ENCODE measurements at regions of chr1 and their contacts with region 1.

Region 1: GRCh38 chr1:40040511-40041465 is at the start of gene CAP1:
- DNase-seq: peak; percentile 99 to 100 (median 100)
- ATAC-seq: peak; percentile 89
- H3K4me3 ChIP-seq: peak within 1 kb of the TSS; percentile 99
- H3K4me3 Mint-ChIP-seq: peak within 1 kb of the TSS; percentile 89
- H3K27ac ChIP-seq: peak within 1 kb of the TSS; percentile 92 to 94
- H3K27ac Mint-ChIP-seq: peak within 1 kb of the TSS; percentile 93
- H3K4me1 ChIP-seq: peaks cover 71% of the 10 kb centered on the region
- H3K4me1 Mint-ChIP-seq: peaks cover 70% of the 10 kb centered on the region
- H3K27me3 ChIP-seq: no peaks in the 10 kb centered on the region
- H3K27me3 Mint-ChIP-seq: no peaks in the 10 kb centered on the region
- CTCF ChIP-seq: no peak
- total RNA-seq, gene CAP1: 123 to 126 TPM

Region 2: DNA sequence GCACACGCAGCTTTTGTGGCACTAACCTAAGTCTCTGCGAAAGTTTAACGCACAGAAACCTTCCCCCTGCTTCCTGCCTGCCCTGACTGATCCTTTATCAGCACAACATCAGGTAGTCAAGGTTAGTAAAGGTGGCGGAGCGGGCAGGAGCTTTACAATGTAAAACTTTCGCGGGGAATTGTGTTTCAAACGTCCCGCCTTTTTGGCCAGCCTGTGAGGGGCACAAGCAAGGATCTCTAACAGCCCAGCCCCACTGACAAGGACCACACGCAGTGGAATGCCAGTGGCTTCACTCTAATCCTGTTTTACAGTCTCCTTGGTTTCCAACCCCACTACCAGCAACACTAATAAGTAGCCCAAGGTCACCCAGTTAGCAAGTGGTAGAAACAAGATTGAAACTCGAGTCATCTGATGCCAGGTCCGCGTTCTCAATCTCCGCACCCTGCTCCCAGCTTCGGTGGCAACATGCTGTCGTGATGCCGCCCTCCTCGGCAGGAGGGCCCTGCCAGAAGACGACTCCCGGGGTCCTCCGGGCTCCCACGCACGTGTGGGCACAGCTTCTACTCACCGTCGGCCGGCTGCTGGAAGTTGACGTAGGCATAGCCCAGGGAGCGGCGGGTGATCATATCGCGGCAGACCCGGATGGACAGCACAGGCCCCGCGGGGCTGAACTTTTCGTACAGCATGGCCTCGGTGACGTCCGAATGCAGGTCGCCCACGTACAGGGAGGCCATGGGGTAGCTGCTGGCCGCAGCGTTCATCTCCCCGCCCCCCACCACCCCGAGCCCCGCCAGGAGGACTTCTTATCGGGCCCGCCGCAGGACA is 465.4 kb before region 1 on chr1:
- CTCF ChIA-PET with region 1: no interaction called
- POLR2A ChIA-PET with region 1: no interaction called
- intact Hi-C with region 1: loop called in 1 of 2 experiments (anchors 5 kb)
- DNase-seq: peak; percentile 16 to 78 (median 57)
- ATAC-seq: peak; percentile 65
- H3K4me3 ChIP-seq: peak overlapping the region; percentile 64 to 75
- H3K4me3 Mint-ChIP-seq: peak overlapping the region; percentile 93
- H3K27ac ChIP-seq: peak overlapping the region; percentile 68 to 72
- H3K27ac Mint-ChIP-seq: peak overlapping the region; percentile 92
- H3K4me1 ChIP-seq: peaks cover 41% of the 10 kb centered on the region
- H3K4me1 Mint-ChIP-seq: peaks cover 44% of the 10 kb centered on the region
- H3K27me3 ChIP-seq: no peaks in the 10 kb centered on the region
- H3K27me3 Mint-ChIP-seq: no peaks in the 10 kb centered on the region
- CTCF ChIP-seq: no peak

Region 3: GRCh38 chr1:40059338-40059959 is 18.7 kb after region 1 on chr1:
- CTCF ChIA-PET with region 1: interaction called, 20 read pairs
- POLR2A ChIA-PET with region 1: interaction called, 68 read pairs
- intact Hi-C with region 1: loop called (anchors 1 kb)
- DNase-seq: peak in 3 of 9 experiments; percentile 35 to 74 (median 50)
- ATAC-seq: peak; percentile 74
- H3K4me3 ChIP-seq: peak overlapping the region; percentile 18 to 24
- H3K4me3 Mint-ChIP-seq: peak overlapping the region; percentile 79
- H3K27ac ChIP-seq: peak overlapping the region; percentile 36 to 71
- H3K27ac Mint-ChIP-seq: peak overlapping the region; percentile 81
- H3K4me1 ChIP-seq: peaks cover 89% of the 10 kb centered on the region
- H3K4me1 Mint-ChIP-seq: peaks cover 92% of the 10 kb centered on the region
- H3K27me3 ChIP-seq: no peaks in the 10 kb centered on the region
- H3K27me3 Mint-ChIP-seq: no peaks in the 10 kb centered on the region
- CTCF ChIP-seq: no peak

Region 4: GRCh38 chr1:40096977-40097782 is 56.4 kb after region 1 on chr1 and contains the start of gene PPT1:
- CTCF ChIA-PET with region 1: no interaction called
- POLR2A ChIA-PET with region 1: no interaction called
- intact Hi-C with region 1: loop called in 1 of 2 experiments (anchors 2 kb)
- DNase-seq: peak; percentile 58 to 90 (median 77)
- ATAC-seq: peak; percentile 83
- H3K4me3 ChIP-seq: peak within 1 kb of the TSS; percentile 55 to 57
- H3K4me3 Mint-ChIP-seq: peak within 1 kb of the TSS; percentile 91
- H3K27ac ChIP-seq: peak within 1 kb of the TSS; percentile 24 to 51
- H3K27ac Mint-ChIP-seq: peak within 1 kb of the TSS; percentile 94
- H3K4me1 ChIP-seq: peaks cover 23% of the 10 kb centered on the region
- H3K4me1 Mint-ChIP-seq: peaks cover 32% of the 10 kb centered on the region
- H3K27me3 ChIP-seq: peaks cover 0 to 4% of the 10 kb centered on the region in 2 experiments
- H3K27me3 Mint-ChIP-seq: no peaks in the 10 kb centered on the region
- CTCF ChIP-seq: peak; percentile 52
- total RNA-seq, gene PPT1: 32.2 to 34.2 TPM

Region 5: DNA sequence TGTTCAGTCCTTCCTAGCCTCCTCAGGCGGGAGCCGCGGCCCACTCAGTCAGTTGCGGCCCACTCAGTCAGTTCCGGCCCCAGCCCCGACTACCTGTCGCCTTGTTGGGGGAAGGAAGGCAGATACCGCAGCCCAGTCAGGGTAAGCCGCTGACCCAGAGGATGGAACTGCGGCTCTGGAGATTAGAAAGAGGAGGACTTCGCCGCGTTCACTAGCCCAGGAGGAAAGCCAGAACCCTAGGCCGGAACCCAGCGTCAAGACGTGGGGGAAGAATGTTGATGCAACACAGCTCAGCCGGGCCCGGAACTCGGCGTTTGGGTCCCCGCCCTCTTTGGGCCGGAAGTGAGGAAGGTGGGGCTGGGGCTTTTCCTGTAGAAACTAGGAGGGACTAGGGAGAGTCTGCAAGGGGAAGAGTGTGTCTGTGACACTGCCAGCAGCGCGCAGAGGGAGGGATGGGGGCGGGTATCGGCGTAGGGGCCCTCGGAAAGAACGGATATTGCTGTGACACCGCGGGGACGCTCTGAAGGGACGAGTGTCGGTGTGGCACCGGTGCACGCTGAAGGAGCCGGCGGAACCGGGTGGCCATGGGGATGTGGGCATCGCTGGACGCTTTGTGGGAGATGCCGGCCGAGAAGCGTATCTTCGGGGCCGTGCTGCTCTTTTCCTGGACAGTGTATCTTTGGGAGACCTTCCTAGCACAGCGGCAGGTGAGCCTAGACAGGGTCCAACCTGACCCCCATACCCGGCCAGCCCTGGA is 217.1 kb after region 1 on chr1 and contains the start of gene ZMPSTE24:
- CTCF ChIA-PET with region 1: interaction called, 3 read pairs
- POLR2A ChIA-PET with region 1: no interaction called
- intact Hi-C with region 1: loop called in 1 of 2 experiments (anchors 1 kb)
- DNase-seq: peak; percentile 92 to 99 (median 95)
- ATAC-seq: peak; percentile 95
- H3K4me3 ChIP-seq: peak within 1 kb of the TSS; percentile 95 to 98
- H3K4me3 Mint-ChIP-seq: peak within 1 kb of the TSS; percentile 98
- H3K27ac ChIP-seq: peak within 1 kb of the TSS; percentile 88 to 99
- H3K27ac Mint-ChIP-seq: peak within 1 kb of the TSS; percentile 100
- H3K4me1 ChIP-seq: peaks cover 20% of the 10 kb centered on the region
- H3K4me1 Mint-ChIP-seq: peaks cover 56% of the 10 kb centered on the region
- H3K27me3 ChIP-seq: no peaks in the 10 kb centered on the region
- H3K27me3 Mint-ChIP-seq: no peaks in the 10 kb centered on the region
- CTCF ChIP-seq: no peak
- total RNA-seq, gene ZMPSTE24: 11.5 to 12.2 TPM

Region 6: DNA sequence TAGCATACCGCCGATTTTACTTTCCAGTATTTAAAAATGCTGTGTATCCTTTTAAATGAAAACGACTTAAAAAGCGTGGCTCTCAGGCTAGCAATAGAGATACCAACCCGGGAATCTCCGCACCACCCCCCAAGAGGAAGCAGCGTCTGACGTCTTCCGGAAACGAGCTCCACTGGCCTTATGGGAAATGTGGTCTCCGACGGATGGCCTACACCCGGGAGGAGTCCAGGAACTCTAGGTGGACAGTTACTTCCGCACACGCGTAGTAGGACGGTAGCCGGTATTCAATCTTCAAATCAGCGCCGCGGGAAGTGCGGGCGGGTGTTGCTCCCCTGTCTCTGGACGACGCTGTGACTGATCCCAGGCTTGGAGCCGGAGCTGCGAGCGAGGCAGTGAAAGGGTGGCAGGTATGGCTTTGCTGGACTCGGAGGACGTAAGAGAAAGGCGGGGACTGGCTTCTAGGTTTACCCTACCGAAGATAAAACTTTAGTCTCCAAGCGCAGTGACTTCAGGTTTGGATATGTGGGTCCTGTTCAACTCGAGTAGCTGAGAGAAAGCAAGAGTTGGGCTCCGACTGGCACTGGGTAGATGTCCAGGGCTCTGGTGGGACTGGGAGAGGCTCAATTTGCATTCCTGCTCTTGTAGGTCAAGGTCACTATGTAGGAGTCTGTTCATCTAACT is 490.7 kb after region 1 on chr1 and contains the start of gene ZNF684:
- CTCF ChIA-PET with region 1: no interaction called
- POLR2A ChIA-PET with region 1: no interaction called
- intact Hi-C with region 1: no loop called
- DNase-seq: peak; percentile 64 to 96 (median 85)
- ATAC-seq: peak; percentile 96
- H3K4me3 ChIP-seq: peak within 1 kb of the TSS; percentile 68 to 71
- H3K4me3 Mint-ChIP-seq: peak within 1 kb of the TSS; percentile 100
- H3K27ac ChIP-seq: peak within 1 kb of the TSS; percentile 57 to 83
- H3K27ac Mint-ChIP-seq: peak within 1 kb of the TSS; percentile 93
- H3K4me1 ChIP-seq: peaks cover 11% of the 10 kb centered on the region
- H3K4me1 Mint-ChIP-seq: peaks cover 28% of the 10 kb centered on the region
- H3K27me3 ChIP-seq: peaks cover 0 to 3% of the 10 kb centered on the region in 2 experiments
- H3K27me3 Mint-ChIP-seq: peaks cover 6% of the 10 kb centered on the region
- CTCF ChIP-seq: no peak
- total RNA-seq, gene ZNF684: 2.9 TPM

Region 7: DNA sequence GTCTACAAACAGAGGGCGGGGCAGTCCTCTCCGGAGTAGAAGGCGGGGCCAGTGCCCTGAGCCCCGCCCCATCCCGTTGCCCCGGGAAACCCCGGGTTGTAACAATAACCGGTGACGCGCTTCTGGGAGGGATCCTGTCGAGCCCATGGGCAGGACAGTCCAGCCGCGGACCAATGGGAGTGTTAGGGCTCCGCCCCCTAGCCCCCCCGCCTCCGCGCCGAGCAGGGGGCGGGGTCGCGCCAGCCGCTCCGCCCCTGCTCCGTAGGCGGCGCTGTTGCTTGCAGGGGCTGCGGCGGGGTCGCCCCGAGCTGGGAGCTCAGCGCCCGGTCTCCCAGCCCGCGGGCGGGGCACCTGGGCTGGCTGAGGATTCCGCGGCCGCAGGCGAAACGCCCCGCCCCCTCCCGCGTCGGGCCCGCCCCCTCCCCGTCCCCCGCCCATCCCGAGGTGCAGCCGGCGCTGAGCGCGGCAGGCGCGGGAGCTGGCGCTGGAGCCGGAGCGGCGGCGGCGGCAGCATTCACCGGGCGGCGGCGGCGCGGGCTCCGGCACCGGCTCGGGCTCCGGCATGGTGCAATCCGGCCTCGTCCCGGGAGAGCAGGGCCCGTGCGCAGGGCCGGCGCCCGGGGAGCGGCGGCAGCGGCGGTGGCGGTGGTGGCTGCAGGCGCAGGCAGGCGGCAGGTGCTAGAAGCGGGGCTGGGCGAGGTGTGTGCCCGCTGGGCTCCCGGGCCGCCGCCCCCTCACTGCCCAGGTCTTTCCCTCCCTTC is 1320.4 kb after region 1 on chr1 and contains the start of gene FOXO6:
- CTCF ChIA-PET with region 1: no interaction called
- POLR2A ChIA-PET with region 1: no interaction called
- intact Hi-C with region 1: loop called in 1 of 2 experiments (anchors 10 kb)
- DNase-seq: peak; percentile 85 to 97 (median 94)
- ATAC-seq: peak; percentile 90
- H3K4me3 ChIP-seq: peak within 1 kb of the TSS; percentile 35 to 52
- H3K4me3 Mint-ChIP-seq: peak within 1 kb of the TSS; percentile 82
- H3K27ac ChIP-seq: peak within 1 kb of the TSS; percentile 14 to 25
- H3K27ac Mint-ChIP-seq: peak within 1 kb of the TSS; percentile 28
- H3K4me1 ChIP-seq: peaks cover 22% of the 10 kb centered on the region
- H3K4me1 Mint-ChIP-seq: peaks cover 23% of the 10 kb centered on the region
- H3K27me3 ChIP-seq: peaks cover 10 to 11% of the 10 kb centered on the region in 2 experiments
- H3K27me3 Mint-ChIP-seq: peaks cover 29% of the 10 kb centered on the region
- CTCF ChIP-seq: no peak
- total RNA-seq, gene FOXO6: 1.4 to 1.7 TPM